Right lobe of liver (tissue), 6 donors: ENCODE measurements at regions of chr10 and their contacts with region 1.

Region 1: DNA sequence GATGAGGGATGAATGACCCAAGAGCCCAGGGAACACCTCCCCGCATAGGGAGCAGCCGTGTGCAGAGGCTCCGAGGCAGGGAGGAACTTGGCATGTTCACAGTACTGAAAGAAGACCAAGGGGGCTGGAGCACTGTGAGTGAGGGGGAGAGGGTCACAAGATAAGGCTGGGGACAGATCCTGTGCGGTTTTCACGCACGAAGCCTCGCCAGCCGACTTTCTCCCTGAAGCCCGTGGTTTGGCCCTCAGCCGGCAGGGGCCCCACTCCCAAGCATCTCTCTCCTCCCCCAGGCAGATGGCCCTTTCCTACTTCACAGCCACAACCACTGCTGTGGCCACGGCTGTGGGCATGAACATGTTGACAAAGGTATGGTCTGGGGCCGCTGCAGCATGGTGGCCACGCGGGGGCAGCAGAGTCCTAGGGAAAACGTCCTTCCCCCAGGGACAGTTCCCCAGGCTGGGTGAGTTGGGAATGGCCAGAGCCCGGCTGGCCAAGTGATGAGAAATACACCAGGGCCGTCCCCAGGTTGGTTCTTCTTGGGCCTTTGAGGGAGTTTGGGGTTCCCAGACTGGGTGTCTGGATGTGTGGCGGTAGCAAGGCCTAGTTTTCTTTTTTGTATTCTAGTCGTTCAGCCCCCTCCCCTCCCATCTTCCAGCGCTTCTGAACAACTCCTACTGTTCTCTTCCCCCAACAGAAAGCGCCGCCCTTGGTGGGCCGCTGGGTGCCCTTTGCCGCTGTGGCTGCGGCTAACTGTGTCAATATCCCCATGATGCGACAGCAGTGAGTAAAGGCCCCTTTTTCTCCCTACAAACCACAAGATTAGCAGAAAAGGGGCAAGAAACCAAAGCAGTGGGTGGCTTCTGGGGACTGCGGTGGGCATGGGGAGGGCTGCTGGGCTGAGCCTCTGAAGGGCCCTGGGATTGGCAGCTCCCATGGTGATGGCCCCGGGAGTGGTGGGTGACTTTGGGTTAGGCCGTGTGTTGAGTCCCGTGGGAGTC is 14.4 kb upstream of the WBP1L start:
- DNase-seq: peak; percentile 85 to 87 (median 87)
- ATAC-seq: peak; percentile 94 to 95 (median 94)
- H3K4me3 ChIP-seq: no peak overlapping the region
- H3K27ac ChIP-seq: no peak overlapping the region
- H3K4me1 ChIP-seq: peaks cover 0 to 9% (median 0%) of the 10 kb centered on the region in 4 donors
- H3K27me3 ChIP-seq: no peaks in the 10 kb centered on the region
- CTCF ChIP-seq: peak; percentile 91 to 96 (median 92)
- POLR2A ChIP-seq: no peak

Region 2: GRCh38 chr10:102555781-102556328 is 173.5 kb before region 1 on chr10:
- intact Hi-C with region 1: no loop called
- DNase-seq: no peak
- ATAC-seq: no peak
- H3K4me3 ChIP-seq: no peak overlapping the region
- H3K27ac ChIP-seq: no peak overlapping the region
- H3K4me1 ChIP-seq: no peaks in the 10 kb centered on the region
- H3K27me3 ChIP-seq: no peaks in the 10 kb centered on the region
- CTCF ChIP-seq: no peak
- POLR2A ChIP-seq: no peak

Region 3: GRCh38 chr10:102822222-102822621 is 92.9 kb after region 1 on chr10:
- intact Hi-C with region 1: loop called in 1 of 2 experiments (anchors 10 kb)
- DNase-seq: no peak
- ATAC-seq: no peak
- H3K4me3 ChIP-seq: no peak overlapping the region
- H3K27ac ChIP-seq: no peak overlapping the region
- H3K4me1 ChIP-seq: no peaks in the 10 kb centered on the region
- H3K27me3 ChIP-seq: no peaks in the 10 kb centered on the region
- CTCF ChIP-seq: no peak
- POLR2A ChIP-seq: no peak

Region 4: GRCh38 chr10:102904346-102904745 is 175.0 kb after region 1 on chr10:
- intact Hi-C with region 1: loop called (anchors 10 kb)
- DNase-seq: no peak
- ATAC-seq: no peak
- H3K4me3 ChIP-seq: no peak overlapping the region
- H3K27ac ChIP-seq: no peak overlapping the region
- H3K4me1 ChIP-seq: no peaks in the 10 kb centered on the region
- H3K27me3 ChIP-seq: no peaks in the 10 kb centered on the region
- CTCF ChIP-seq: no peak
- POLR2A ChIP-seq: no peak